Left lung (tissue), 14 donors: ENCODE measurements at regions of chr3 and their contacts with region 1.

Region 1: GRCh38 chr3:192802957-192803899 is 75.9 kb upstream of the FGF12 start:
- DNase-seq: peak in 1 of 4 donors; percentile 28
- ATAC-seq: peak; percentile 76
- H3K4me3 ChIP-seq: no peak overlapping the region
- H3K27ac ChIP-seq: no peak overlapping the region
- H3K4me1 ChIP-seq: no peaks in the 10 kb centered on the region
- H3K27me3 ChIP-seq: no peaks in the 10 kb centered on the region
- CTCF ChIP-seq: peak; percentile 33 to 40

Region 2: DNA sequence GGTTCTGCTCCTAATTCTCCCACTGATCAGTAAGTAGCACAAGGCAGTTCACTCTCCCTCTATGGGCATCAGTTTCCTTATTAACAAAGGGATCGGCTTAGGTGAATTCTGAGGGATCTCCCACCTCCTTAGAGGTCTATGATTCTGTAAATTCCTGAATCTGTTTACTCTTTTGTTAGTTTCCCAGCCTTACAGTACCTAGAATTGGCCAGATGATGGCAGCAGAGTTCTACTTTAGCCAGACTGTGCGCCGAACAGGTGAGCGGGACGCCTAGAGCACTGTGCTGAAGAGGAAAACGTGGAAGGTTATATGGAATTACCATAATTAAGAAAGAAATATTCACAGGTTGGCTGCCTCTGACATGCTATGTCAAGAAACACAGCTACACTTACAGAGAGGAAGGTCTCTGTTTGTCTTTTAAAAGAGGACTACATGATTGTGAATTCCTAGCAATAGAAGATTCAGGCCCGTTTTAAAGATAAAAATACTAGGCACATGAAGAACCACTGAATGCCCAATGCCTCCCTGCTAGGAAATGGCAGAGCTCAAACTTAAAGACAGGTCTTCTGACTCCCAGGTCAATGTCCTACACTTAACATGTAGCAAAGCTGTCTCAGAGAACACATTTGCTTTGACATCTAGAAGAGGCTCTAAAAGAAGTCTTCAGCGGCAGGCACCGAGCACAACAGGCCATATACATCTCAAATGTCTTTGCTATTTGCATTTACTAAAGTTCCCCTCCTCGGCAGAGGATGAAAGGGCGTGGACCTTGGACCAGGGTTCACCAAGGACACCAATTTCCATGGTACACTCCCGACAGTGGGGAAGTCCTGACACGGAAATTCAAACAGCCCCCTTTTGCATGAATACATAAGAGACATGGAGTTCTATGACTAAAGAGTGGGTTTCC is 335.7 kb before region 1 on chr3:
- intact Hi-C with region 1: loop called in 1 of 2 experiments (anchors 5 kb)
- DNase-seq: peak in 2 of 4 donors; percentile 23 to 49
- ATAC-seq: peak; percentile 97
- H3K4me3 ChIP-seq: no peak overlapping the region
- H3K27ac ChIP-seq: no peak overlapping the region
- H3K4me1 ChIP-seq: no peaks in the 10 kb centered on the region
- H3K27me3 ChIP-seq: peaks cover 0 to 7% of the 10 kb centered on the region in 2 donors
- CTCF ChIP-seq: peak; percentile 67 to 87

Region 3: DNA sequence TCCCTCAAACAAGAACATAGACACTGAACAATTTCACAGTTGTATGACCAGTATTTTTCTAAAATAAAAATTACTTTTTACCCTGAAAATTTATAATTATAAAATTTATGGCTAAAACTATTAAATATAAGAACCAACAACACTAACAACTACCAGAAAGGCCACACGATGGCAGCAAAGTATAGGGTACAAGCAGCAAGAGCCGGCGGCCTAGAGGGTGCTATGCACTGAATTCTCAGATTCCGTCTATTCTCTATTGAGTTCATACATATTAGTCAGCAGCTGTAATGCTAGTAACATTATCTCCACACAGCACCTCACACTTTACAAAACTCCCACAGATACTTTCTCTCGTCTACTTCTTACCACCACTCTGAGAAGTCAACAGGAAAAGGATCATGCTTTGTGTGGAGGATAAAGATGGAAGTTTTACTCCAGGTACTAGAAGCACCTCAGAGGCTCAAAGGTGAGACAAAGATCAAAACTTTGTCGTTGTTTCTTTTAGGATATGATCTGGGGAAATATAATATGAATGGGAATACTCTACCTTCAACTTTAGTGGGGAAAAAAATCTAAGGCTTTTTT is 236.4 kb before region 1 on chr3:
- intact Hi-C with region 1: loop called in 1 of 2 experiments (anchors 10 kb)
- DNase-seq: peak in 3 of 4 donors; percentile 54 to 84 (median 54)
- ATAC-seq: peak; percentile 96
- H3K4me3 ChIP-seq: no peak overlapping the region
- H3K27ac ChIP-seq: no peak overlapping the region
- H3K4me1 ChIP-seq: no peaks in the 10 kb centered on the region
- H3K27me3 ChIP-seq: peaks cover 0 to 31% of the 10 kb centered on the region in 2 donors
- CTCF ChIP-seq: peak; percentile 40 to 57